Ascending aorta (tissue), 2 donors: ENCODE measurements at regions of chr6 and their contacts with region 1.

Region 1: GRCh38 chr6:116279260-116280063 is at the start of gene TSPYL1:
- DNase-seq: peak; percentile 88 to 98
- H3K4me3 ChIP-seq: peak within 1 kb of the TSS; percentile 93 to 95
- H3K27ac ChIP-seq: peak within 1 kb of the TSS; percentile 99 to 100
- H3K4me1 ChIP-seq: peaks cover 4 to 31% of the 10 kb centered on the region in 2 donors
- H3K27me3 ChIP-seq: no peaks in the 10 kb centered on the region
- CTCF ChIP-seq: no peak
- total RNA-seq, gene TSPYL1: 36.6 TPM

Region 2: GRCh38 chr6:116073765-116074419 is 205.6 kb before region 1 on chr6:
- intact Hi-C with region 1: no loop called
- DNase-seq: no peak
- H3K4me3 ChIP-seq: no peak overlapping the region
- H3K27ac ChIP-seq: no peak overlapping the region
- H3K4me1 ChIP-seq: peaks cover 0 to 16% of the 10 kb centered on the region in 2 donors
- H3K27me3 ChIP-seq: no peaks in the 10 kb centered on the region
- CTCF ChIP-seq: no peak

Region 3: DNA sequence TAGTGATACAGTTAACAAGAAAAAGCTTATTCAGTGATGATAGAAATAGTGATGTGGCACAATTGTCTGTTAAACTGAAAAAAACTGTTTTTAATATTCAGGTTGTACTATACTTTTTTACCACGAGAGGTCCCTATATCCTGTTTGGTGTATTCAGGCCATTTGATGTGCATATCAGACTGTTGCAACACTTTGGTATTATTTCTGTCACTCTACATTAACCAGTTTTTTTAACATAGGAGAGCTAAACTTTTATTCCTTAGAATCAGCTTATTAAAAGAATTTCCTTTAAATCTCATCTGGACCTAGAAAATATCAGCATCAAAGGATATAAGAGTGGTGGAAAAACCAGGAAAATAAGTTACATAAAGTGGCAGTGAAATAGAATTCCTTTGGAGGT is 62.4 kb before region 1 on chr6:
- intact Hi-C with region 1: loop called (anchors 5 kb)
- DNase-seq: no peak
- H3K4me3 ChIP-seq: no peak overlapping the region
- H3K27ac ChIP-seq: no peak overlapping the region
- H3K4me1 ChIP-seq: no peaks in the 10 kb centered on the region
- H3K27me3 ChIP-seq: no peaks in the 10 kb centered on the region
- CTCF ChIP-seq: peak; percentile 15 to 56 (median 47)

Region 4: DNA sequence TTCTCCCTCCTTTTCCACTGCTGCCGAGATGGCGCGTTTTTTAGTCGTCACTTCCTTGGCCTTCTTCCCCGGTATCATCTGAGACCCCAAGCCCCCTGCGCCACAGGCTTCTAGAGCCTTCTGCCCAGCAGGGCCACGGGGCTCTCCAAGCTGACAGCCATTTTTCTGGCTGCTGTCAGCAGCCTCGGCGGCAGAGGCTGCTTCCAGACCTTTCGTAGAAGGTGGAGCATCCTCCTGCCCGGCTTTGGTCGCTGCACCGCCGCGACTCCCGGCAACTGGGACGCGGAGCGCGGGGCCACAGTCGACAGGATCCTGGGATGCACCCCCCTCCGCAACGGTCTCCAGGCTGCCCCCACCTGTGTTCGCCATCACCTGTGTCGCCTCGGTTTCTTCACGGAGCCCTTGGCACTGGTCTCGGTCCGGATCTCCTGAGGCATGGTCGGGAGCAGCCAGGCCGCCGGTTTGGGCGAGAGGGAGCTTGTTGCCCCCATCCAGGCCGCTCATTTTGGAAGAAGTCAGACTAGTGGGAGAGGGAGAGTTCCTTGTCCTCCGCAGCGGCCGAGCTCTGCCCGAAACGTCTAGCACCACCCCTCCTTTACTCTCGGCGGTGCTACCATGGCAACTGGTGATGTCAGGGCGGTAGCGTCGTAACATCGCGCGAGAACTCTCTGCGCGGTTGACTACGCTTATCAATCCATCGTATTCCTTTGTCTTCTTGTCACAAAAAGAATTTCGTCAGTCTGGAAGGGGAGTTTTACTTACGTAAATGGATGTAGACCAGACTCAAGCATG is 25.8 kb before region 1 on chr6 and contains the start of gene TSPYL4:
- intact Hi-C with region 1: loop called (anchors 1 kb)
- DNase-seq: peak; percentile 75 to 97
- H3K4me3 ChIP-seq: peak within 1 kb of the TSS; percentile 66 to 90
- H3K27ac ChIP-seq: peak within 1 kb of the TSS; percentile 83 to 92
- H3K4me1 ChIP-seq: peaks cover 11 to 26% of the 10 kb centered on the region in 2 donors
- H3K27me3 ChIP-seq: no peaks in the 10 kb centered on the region
- CTCF ChIP-seq: no peak
- total RNA-seq, gene TSPYL4: 8.8 TPM

Region 5: GRCh38 chr6:116447496-116448011 is 168.1 kb after region 1 on chr6:
- intact Hi-C with region 1: loop called (anchors 5 kb)
- DNase-seq: peak in 1 of 2 donors; percentile 66
- H3K4me3 ChIP-seq: no peak overlapping the region
- H3K27ac ChIP-seq: no peak overlapping the region
- H3K4me1 ChIP-seq: peaks cover 0 to 6% of the 10 kb centered on the region in 2 donors
- H3K27me3 ChIP-seq: no peaks in the 10 kb centered on the region
- CTCF ChIP-seq: peak in 1 of 3 experiments; percentile 28

Region 6: GRCh38 chr6:116511404-116512110 is 232.1 kb after region 1 on chr6 and contains the start of gene CALHM5:
- intact Hi-C with region 1: loop called (anchors 2 kb)
- DNase-seq: peak in 1 of 2 donors; percentile 81
- H3K4me3 ChIP-seq: peak within 1 kb of the TSS; percentile 58 to 69
- H3K27ac ChIP-seq: peak within 1 kb of the TSS; percentile 92 to 93
- H3K4me1 ChIP-seq: peaks cover 0 to 2% of the 10 kb centered on the region in 2 donors
- H3K27me3 ChIP-seq: no peaks in the 10 kb centered on the region
- CTCF ChIP-seq: peak; percentile 70 to 80 (median 76)
- total RNA-seq, gene CALHM5: 3.4 TPM

Region 7: DNA sequence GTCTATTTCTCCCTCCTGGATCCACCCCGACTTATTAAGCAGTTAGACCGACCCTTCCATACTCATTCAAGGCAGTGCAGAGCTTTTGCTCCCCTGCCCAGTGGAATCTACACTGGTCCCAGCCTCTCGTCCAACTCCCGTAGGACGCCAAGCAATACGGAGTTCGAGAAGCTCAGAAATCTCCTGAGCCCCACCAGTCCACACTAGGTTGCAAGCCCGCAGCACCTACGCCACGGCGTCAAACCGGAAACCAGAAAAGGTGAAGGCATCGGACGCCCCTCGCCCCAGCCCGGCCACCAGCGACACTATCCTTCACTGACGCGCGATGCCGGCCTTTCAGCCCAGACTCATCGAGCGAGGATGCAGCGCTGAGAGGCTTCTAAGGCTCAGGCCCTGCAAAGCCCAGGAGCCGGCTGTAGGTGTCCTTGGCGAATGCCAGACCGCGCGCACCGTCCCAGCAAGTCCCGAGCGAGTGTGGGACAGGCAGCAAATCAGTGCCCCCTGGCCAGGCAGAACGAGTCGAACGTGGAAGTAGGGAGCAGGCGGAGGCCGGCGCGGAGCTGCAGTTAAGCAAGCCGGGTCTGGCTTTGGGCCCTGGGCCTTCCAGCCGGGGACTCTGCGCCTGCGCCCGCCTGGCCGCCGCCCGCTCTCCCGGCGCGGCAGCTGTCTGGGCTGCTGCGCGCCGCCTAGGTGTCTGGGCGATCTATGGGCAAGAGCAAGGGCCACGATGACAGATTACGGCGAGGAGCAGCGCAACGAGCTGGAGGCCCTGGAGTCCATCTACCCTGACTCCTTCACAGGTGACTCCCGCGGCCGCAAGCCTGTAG is 291.6 kb after region 1 on chr6 and contains the start of gene RWDD1:
- intact Hi-C with region 1: loop called (anchors 2 kb)
- DNase-seq: peak; percentile 96 to 99
- H3K4me3 ChIP-seq: peak within 1 kb of the TSS; percentile 68 to 74
- H3K27ac ChIP-seq: peak within 1 kb of the TSS; percentile 89 to 92
- H3K4me1 ChIP-seq: peaks cover 0 to 14% of the 10 kb centered on the region in 2 donors
- H3K27me3 ChIP-seq: no peaks in the 10 kb centered on the region
- CTCF ChIP-seq: peak in 2 of 3 experiments; percentile 13
- total RNA-seq, gene RWDD1: 11.0 TPM

Region 8: DNA sequence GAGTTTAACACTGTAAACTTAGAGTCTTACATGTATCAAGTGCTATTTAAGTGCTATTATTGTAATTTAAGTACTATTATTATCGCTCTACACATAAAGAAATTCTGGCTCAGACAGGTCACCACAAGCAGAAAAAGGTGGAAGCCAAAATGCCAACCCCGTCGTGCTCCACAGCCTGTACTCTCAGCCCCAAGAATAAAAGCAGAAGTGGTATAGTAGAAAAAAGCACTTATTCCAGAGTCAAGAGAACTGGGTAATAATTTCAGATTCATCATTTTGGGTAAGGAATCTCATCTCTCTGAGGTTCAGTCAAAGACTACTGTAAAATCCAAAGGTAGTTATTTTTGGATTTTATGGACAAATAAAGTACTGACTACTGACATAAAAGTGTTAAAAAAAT is 388.2 kb after region 1 on chr6:
- intact Hi-C with region 1: loop called (anchors 10 kb)
- DNase-seq: no peak
- H3K4me3 ChIP-seq: peak overlapping the region; percentile 65 to 81
- H3K27ac ChIP-seq: no peak overlapping the region
- H3K4me1 ChIP-seq: peaks cover 0 to 20% of the 10 kb centered on the region in 2 donors
- H3K27me3 ChIP-seq: no peaks in the 10 kb centered on the region
- CTCF ChIP-seq: no peak